ENCODE measurements at regions of chr19 and their contacts with region 1.

Region 1: GRCh38 chr19:32345261-32346207 is at the start of gene ZNF507:
- DNase-seq: peak; percentile 75 to 94 (median 77)
- ATAC-seq: peak; percentile 96
- H3K4me3 ChIP-seq: peak within 1 kb of the TSS; percentile 95 to 97
- H3K27ac ChIP-seq: peak within 1 kb of the TSS; percentile 71 to 89
- H3K4me1 ChIP-seq: peaks cover 10 to 31% of the 10 kb centered on the region in 2 donors
- H3K27me3 ChIP-seq: peaks cover 0 to 97% of the 10 kb centered on the region in 2 donors
- CTCF ChIP-seq: no peak
- polyA plus RNA-seq, gene ZNF507: 27.3 to 31.4 (median 28.4) TPM

Region 2: DNA sequence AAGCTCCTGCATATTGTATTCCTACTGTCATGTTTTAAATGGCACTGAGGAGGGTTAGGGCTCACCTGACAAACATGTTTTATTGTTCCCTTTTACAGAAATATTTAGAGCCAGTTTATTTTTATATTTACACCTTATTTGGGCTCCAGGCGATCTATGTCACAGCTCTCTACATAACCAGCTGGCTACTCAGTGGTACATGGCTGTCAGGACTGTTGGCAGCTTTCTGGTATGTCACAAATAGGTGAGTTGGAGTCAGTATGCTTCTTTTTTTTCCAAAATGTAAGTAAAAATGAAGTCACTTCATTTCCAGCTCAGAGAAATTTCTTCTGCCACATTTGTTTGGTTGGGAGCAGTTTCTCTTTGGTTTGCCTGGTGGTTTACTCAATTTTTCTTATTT is 91.6 kb after region 1 on chr19:
- intact Hi-C with region 1: no loop called
- DNase-seq: no peak
- ATAC-seq: no peak
- H3K4me3 ChIP-seq: no peak overlapping the region
- H3K27ac ChIP-seq: no peak overlapping the region
- H3K4me1 ChIP-seq: no peaks in the 10 kb centered on the region
- H3K27me3 ChIP-seq: no peaks in the 10 kb centered on the region
- CTCF ChIP-seq: no peak

Region 3: GRCh38 chr19:32570081-32570785 is 224.7 kb after region 1 on chr19:
- intact Hi-C with region 1: loop called in 1 of 2 experiments (anchors 10 kb)
- DNase-seq: peak in 2 of 4 donors; percentile 46 to 68
- ATAC-seq: peak; percentile 91
- H3K4me3 ChIP-seq: no peak overlapping the region
- H3K27ac ChIP-seq: no peak overlapping the region
- H3K4me1 ChIP-seq: no peaks in the 10 kb centered on the region
- H3K27me3 ChIP-seq: peaks cover 0 to 54% of the 10 kb centered on the region in 2 donors
- CTCF ChIP-seq: peak; percentile 36 to 40

Measured in left lung (tissue), 14 donors.